Testis (tissue), 5 donors: ENCODE measurements at regions of chr3 and their contacts with region 1.

Region 1: GRCh38 chr3:195259475-195260279 is 11.3 kb downstream of the XXYLT1 start:
- DNase-seq: peak; percentile 88
- H3K4me3 ChIP-seq: peak overlapping the region; percentile 71
- H3K27ac ChIP-seq: peak overlapping the region; percentile 71 to 78
- H3K4me1 ChIP-seq: peaks cover 12% of the 10 kb centered on the region
- H3K27me3 ChIP-seq: no peaks in the 10 kb centered on the region
- CTCF ChIP-seq: peak; percentile 68 to 100 (median 94)
- POLR2A ChIP-seq: no peak

Region 2: GRCh38 chr3:194870394-194871110 is 389.1 kb before region 1 on chr3:
- intact Hi-C with region 1: no loop called
- DNase-seq: peak; percentile 57
- H3K4me3 ChIP-seq: no peak overlapping the region
- H3K27ac ChIP-seq: peak overlapping the region; percentile 72 to 75
- H3K4me1 ChIP-seq: peaks cover 29% of the 10 kb centered on the region
- H3K27me3 ChIP-seq: no peaks in the 10 kb centered on the region
- CTCF ChIP-seq: no peak
- POLR2A ChIP-seq: no peak

Region 3: GRCh38 chr3:195117978-195118581 is 141.6 kb before region 1 on chr3:
- intact Hi-C with region 1: loop called (anchors 10 kb)
- DNase-seq: no peak
- H3K4me3 ChIP-seq: no peak overlapping the region
- H3K27ac ChIP-seq: no peak overlapping the region
- H3K4me1 ChIP-seq: peaks cover 11% of the 10 kb centered on the region
- H3K27me3 ChIP-seq: no peaks in the 10 kb centered on the region
- CTCF ChIP-seq: no peak
- POLR2A ChIP-seq: no peak